Transverse colon (tissue), 4 donors: ENCODE measurements at regions of chr17 and their contacts with region 1.

Region 1: GRCh38 chr17:15914400-15915170 is 30.3 kb upstream of the ADORA2B start:
- DNase-seq: no peak
- H3K4me3 ChIP-seq: no peak overlapping the region
- H3K27ac ChIP-seq: no peak overlapping the region
- H3K4me1 ChIP-seq: peaks cover 0 to 15% (median 2%) of the 10 kb centered on the region in 4 donors
- H3K27me3 ChIP-seq: peaks cover 11% of the 10 kb centered on the region
- CTCF ChIP-seq: no peak
- EP300 ChIP-seq: no peak
- POLR2A ChIP-seq: no peak

Region 2: DNA sequence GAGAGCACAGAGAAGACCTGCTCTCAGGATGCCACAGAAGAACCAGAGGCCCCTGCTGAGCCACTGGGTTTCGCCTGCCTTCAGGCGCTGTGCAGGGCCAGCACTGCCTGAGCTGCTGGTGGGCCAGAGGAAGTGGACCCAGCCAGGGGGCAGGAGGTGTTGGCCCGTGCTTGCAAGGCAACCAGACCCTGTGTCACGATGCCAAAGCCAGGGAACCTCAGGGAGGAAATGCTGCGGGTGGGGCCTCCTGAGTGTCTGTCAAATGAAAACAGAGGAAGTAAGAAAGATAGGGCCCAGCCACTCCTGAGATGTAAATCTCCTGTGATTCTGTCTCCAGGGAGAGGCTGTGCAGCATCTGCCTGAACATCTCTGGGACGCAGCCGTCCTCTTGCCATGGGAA is 27.8 kb before region 1 on chr17:
- in situ Hi-C with region 1: no loop called
- intact Hi-C with region 1: loop called (anchors 1 kb)
- DNase-seq: no peak
- H3K4me3 ChIP-seq: no peak overlapping the region
- H3K27ac ChIP-seq: no peak overlapping the region
- H3K4me1 ChIP-seq: no peaks in the 10 kb centered on the region
- H3K27me3 ChIP-seq: no peaks in the 10 kb centered on the region
- CTCF ChIP-seq: no peak
- EP300 ChIP-seq: no peak
- POLR2A ChIP-seq: no peak